ENCODE measurements at regions of chr5 and their contacts with region 1.

Region 1: DNA sequence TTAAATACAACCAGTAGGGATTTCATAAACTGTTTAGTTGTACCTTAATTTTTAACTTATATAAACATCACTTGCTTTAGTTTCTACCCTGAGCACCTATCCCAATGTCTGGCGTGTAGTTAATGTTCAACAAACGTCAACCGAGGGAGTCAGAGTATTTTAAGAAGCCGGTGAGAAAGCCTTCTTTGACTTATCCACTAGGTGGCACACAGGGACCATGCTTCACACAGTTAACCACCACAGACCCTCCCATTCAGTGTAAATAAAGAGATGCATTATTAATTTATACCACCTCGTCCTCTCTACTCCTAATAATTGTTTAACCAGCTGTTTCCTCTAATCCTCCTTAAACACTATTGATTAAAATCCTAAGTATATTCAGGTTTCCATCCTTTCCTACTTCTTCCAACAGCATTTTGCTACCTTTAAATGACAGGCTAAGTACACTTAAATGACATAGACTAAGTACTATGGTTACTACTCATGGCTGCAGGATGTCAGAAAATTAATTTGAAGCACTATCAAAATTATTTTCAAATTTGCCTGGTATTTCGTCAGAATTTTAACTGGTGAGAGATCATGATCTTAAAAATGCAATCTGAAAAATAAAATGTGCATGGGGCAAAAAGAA is 2.3 kb downstream of the HAPLN1 start:
- DNase-seq: peak; percentile 72
- H3K4me3 Mint-ChIP-seq: no peak overlapping the region
- H3K27ac Mint-ChIP-seq: no peak overlapping the region
- H3K4me1 Mint-ChIP-seq: peaks cover 3% of the 10 kb centered on the region
- H3K27me3 Mint-ChIP-seq: peaks cover 53% of the 10 kb centered on the region

Region 2: GRCh38 chr5:83401122-83401731 is 317.1 kb before region 1 on chr5:
- intact Hi-C with region 1: no loop called
- DNase-seq: no peak
- H3K4me3 Mint-ChIP-seq: no peak overlapping the region
- H3K27ac Mint-ChIP-seq: no peak overlapping the region
- H3K4me1 Mint-ChIP-seq: peaks cover 2% of the 10 kb centered on the region
- H3K27me3 Mint-ChIP-seq: peaks cover 3% of the 10 kb centered on the region

Region 3: DNA sequence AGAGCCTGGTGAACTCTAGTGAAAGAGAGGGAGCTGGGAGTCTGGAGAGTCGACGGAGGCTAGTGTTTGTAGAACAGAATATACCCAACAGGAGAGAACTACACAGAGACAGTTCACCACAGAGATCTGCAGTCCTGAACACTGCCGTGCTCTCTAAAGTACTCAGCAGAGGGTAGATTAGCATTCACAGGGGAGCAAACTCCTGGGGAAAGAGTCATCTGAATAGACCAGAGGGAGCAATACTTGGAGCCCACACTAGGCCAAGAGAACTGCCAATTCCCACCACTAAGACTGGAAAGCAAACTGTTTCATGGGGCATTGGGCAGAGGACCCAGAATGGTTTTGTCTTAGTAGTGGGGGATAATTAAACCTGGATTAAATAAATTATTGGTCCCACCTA is 430.8 kb after region 1 on chr5:
- intact Hi-C with region 1: loop called (anchors 10 kb)
- DNase-seq: no peak
- H3K4me3 Mint-ChIP-seq: no peak overlapping the region
- H3K27ac Mint-ChIP-seq: no peak overlapping the region
- H3K4me1 Mint-ChIP-seq: no peaks in the 10 kb centered on the region
- H3K27me3 Mint-ChIP-seq: no peaks in the 10 kb centered on the region

Region 4: DNA sequence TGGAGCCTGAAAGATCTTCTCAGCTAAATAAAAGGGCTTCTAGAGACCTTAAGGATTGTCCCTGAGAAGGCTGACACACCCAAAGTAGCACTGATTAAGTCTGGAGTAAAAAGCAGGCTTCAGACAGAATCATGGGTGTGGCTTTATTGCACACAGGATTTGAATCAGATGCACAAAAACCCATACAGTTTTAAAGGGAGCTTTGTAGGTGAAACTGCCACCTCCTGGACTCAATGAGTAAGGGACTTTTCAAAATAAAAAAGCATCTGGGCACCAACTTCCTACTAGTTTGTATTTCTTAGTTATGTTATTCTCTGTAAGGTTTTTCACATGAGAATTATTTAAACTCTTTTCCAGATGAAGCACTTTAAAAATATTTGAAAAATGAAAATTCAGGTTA is 537.0 kb after region 1 on chr5:
- intact Hi-C with region 1: loop called (anchors 10 kb)
- DNase-seq: no peak
- H3K4me3 Mint-ChIP-seq: no peak overlapping the region
- H3K27ac Mint-ChIP-seq: no peak overlapping the region
- H3K4me1 Mint-ChIP-seq: no peaks in the 10 kb centered on the region
- H3K27me3 Mint-ChIP-seq: no peaks in the 10 kb centered on the region

Measured in activated CD4-positive, alpha-beta T cell treated with anti-CD3 and anti-CD28 coated beads, Interleukin-2, amount 10 ng/mL, durations not matched to agents 24 days and 14 days (primary cell).